ENCODE measurements at regions of chr18 and their contacts with region 1.

Region 1: GRCh38 chr18:13406049-13406615 is 187.6 kb downstream of the LDLRAD4 start:
- DNase-seq: no peak
- H3K4me3 ChIP-seq: no peak overlapping the region
- H3K27ac ChIP-seq: no peak overlapping the region
- H3K4me1 ChIP-seq: peaks cover 0 to 4% (median 0%) of the 10 kb centered on the region in 4 donors
- H3K27me3 ChIP-seq: no peaks in the 10 kb centered on the region
- CTCF ChIP-seq: no peak
- EP300 ChIP-seq: no peak
- POLR2A ChIP-seq: no peak

Region 2: GRCh38 chr18:13279181-13280069 is 126.7 kb before region 1 on chr18:
- intact Hi-C with region 1: no loop called
- DNase-seq: no peak
- H3K4me3 ChIP-seq: no peak overlapping the region
- H3K27ac ChIP-seq: no peak overlapping the region
- H3K4me1 ChIP-seq: peaks cover 23 to 49% (median 43%) of the 10 kb centered on the region in 4 donors
- H3K27me3 ChIP-seq: no peaks in the 10 kb centered on the region
- CTCF ChIP-seq: no peak
- EP300 ChIP-seq: no peak
- POLR2A ChIP-seq: no peak

Region 3: DNA sequence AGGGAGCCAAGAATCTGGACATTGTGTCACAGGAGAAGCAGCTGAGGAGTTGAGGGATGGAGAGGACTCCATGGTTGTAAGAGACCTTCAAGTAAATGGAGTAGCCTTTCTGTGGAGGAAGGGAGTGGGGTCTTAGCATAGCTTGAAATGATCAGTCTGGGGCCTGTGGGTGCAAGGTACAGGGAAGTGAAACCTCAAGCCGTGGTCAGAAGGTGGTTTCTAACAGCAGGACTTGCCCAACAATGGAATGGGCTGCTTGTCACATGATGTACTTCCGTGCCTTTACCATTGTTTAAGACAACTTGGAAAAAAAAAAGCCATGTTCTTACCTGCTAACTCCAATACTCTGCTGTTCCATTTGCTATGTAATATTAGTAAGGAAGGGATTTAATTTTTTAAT is 46.9 kb before region 1 on chr18:
- intact Hi-C with region 1: loop called (anchors 5 kb)
- DNase-seq: no peak
- H3K4me3 ChIP-seq: no peak overlapping the region
- H3K27ac ChIP-seq: no peak overlapping the region
- H3K4me1 ChIP-seq: peaks cover 6 to 10% (median 7%) of the 10 kb centered on the region in 4 donors
- H3K27me3 ChIP-seq: no peaks in the 10 kb centered on the region
- CTCF ChIP-seq: no peak
- EP300 ChIP-seq: no peak
- POLR2A ChIP-seq: no peak

Measured in esophagus muscularis mucosa (tissue), 4 donors.